Adrenal gland (tissue), 19 donors: ENCODE measurements at regions of chr6 and their contacts with region 1.

Region 1: DNA sequence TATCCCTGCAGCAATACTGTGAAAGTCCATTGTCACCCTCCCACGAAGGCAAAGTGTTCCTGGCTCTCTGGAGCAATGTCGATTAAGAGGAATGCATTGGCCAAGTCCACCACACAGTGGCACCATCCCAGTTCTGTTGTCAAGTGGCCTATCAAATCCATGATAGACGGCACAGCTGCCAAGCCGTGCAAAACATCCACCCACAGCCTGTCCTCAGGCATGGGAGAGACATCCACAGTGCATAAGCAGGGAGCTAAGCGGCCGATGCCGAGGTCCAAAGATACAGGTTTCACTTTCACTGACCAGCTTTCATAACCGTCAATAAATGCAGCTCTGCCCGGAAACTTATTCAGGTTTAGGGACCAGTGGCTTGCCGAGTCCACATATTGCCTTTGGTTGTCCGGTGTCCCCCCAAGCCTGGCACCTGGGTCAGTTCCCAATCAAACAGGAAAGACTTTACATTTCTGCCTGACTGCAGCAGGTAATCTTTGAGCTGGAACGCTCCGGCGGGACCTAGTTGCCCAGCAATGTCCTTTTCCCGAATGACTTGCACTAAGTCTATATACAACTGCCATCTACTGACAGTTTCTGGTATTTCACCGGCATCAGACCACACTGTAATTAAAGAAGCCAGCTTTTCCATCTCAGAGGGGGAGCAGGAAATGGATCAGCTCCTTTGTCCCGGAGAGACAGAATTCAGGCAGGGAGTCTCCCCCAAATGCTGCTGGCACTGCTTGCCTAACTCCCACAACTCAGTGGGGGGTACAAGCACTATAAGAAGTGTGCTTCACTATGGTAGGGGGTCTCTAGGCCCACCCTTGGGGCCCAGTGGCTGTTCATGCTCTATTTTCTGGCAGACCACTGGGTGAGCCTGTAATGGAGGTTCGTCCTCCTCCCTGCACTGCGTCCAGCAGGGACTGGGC is 6.3 kb downstream of the ZKSCAN3 start:
- DNase-seq: peak; percentile 78 to 91 (median 85)
- H3K4me3 ChIP-seq: peak overlapping the region in 3 of 4 donors; percentile 35 to 80 (median 54)
- H3K27ac ChIP-seq: peak overlapping the region; percentile 14 to 95 (median 76)
- H3K4me1 ChIP-seq: peaks cover 4 to 19% of the 10 kb centered on the region in 2 donors
- H3K27me3 ChIP-seq: no peaks in the 10 kb centered on the region
- CTCF ChIP-seq: peak; percentile 66 to 94 (median 92)
- POLR2A ChIP-seq: no peak

Region 2: GRCh38 chr6:27902335-27903314 is 453.4 kb before region 1 on chr6:
- intact Hi-C with region 1: loop called in 1 of 2 experiments (anchors 10 kb)
- DNase-seq: peak; percentile 75 to 97 (median 86)
- H3K4me3 ChIP-seq: peak overlapping the region in 3 of 4 donors; percentile 46 to 85 (median 56)
- H3K27ac ChIP-seq: peak overlapping the region; percentile 59 to 91 (median 84)
- H3K4me1 ChIP-seq: no peaks in the 10 kb centered on the region
- H3K27me3 ChIP-seq: no peaks in the 10 kb centered on the region
- CTCF ChIP-seq: peak in 1 of 6 experiments; percentile 10
- POLR2A ChIP-seq: no peak

Region 3: GRCh38 chr6:28080631-28081485 is 275.1 kb before region 1 on chr6:
- intact Hi-C with region 1: loop called in 1 of 2 experiments (anchors 10 kb)
- DNase-seq: peak; percentile 92 to 99 (median 97)
- H3K4me3 ChIP-seq: peak overlapping the region; percentile 48 to 66 (median 54)
- H3K27ac ChIP-seq: peak overlapping the region; percentile 46 to 94 (median 82)
- H3K4me1 ChIP-seq: peaks cover 6 to 8% of the 10 kb centered on the region in 2 donors
- H3K27me3 ChIP-seq: no peaks in the 10 kb centered on the region
- CTCF ChIP-seq: no peak
- POLR2A ChIP-seq: peak in 1 of 2 donors; percentile 65

Region 4: GRCh38 chr6:28104392-28105244 is 251.4 kb before region 1 on chr6:
- intact Hi-C with region 1: no loop called
- DNase-seq: peak; percentile 75 to 86 (median 80)
- H3K4me3 ChIP-seq: peak overlapping the region in 3 of 4 donors; percentile 63 to 89 (median 89)
- H3K27ac ChIP-seq: peak overlapping the region; percentile 9 to 97 (median 82)
- H3K4me1 ChIP-seq: no peaks in the 10 kb centered on the region
- H3K27me3 ChIP-seq: no peaks in the 10 kb centered on the region
- CTCF ChIP-seq: peak; percentile 67 to 81 (median 71)
- POLR2A ChIP-seq: peak; percentile 26 to 68

Region 5: GRCh38 chr6:28136585-28137504 is 219.2 kb before region 1 on chr6:
- intact Hi-C with region 1: loop called (anchors 5 to 10 kb)
- DNase-seq: peak; percentile 88 to 97 (median 96)
- H3K4me3 ChIP-seq: peak overlapping the region; percentile 54 to 90 (median 72)
- H3K27ac ChIP-seq: peak overlapping the region; percentile 89 to 96 (median 95)
- H3K4me1 ChIP-seq: peaks cover 5 to 31% of the 10 kb centered on the region in 2 donors
- H3K27me3 ChIP-seq: no peaks in the 10 kb centered on the region
- CTCF ChIP-seq: no peak
- POLR2A ChIP-seq: peak; percentile 50 to 67

Region 6: DNA sequence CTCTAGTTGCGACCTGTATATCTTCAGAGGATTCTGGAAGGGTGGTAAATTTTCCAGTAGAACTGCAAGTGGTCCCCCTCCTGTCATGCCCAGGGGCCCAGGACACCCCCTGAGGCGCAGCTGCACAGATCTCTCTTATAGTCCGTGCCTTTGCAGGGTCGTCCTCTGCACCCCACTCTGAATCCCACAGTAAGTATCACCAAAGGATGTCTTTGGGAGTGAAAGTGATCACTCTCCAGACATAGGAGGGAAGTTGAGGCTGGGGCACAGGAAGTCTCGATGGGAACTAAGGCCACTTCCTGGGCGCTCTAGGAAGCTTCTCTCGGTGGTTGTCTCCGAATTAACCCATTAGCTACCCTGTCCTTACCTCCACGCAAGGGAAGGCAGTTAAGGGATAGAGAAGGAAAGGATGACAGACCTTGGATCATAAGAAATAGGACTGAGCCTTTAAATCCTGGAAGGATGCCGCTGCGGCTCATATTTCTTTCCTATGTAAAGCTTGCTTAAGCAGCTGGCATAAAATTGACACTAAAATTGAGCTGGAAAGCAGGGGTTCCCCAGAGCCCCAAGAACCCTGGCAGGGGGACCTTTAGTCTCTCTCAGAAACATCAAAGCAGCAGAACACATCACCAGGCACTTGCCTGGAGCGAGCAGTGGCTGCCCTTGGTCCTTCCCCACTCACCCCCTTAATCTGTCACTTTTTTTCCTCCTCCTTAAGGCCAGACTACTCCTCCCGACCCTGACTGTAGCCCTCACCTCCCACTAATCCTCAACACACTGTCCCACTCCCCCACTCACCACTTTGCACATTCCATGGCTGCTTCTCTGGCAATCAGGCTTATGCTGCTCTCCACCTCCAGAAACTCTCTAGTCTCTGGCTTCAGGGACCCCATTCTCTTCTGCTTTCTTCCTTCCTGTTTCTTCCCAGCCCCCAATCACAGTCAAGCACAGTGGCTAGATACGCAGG is 103.7 kb before region 1 on chr6 and contains the start of gene ZKSCAN4:
- intact Hi-C with region 1: loop called in 1 of 2 experiments (anchors 10 kb)
- DNase-seq: peak; percentile 70 to 84 (median 82)
- H3K4me3 ChIP-seq: peak within 1 kb of the TSS; percentile 72 to 86 (median 77)
- H3K27ac ChIP-seq: peak within 1 kb of the TSS in 3 of 5 donors; percentile 45 to 79 (median 49)
- H3K4me1 ChIP-seq: peaks cover 17 to 29% of the 10 kb centered on the region in 2 donors
- H3K27me3 ChIP-seq: no peaks in the 10 kb centered on the region
- CTCF ChIP-seq: no peak
- POLR2A ChIP-seq: no peak
- total RNA-seq, gene ZKSCAN4: 1.5 to 7.3 (median 5.1) TPM

Region 7: GRCh38 chr6:28281288-28282064 is 74.5 kb before region 1 on chr6 and contains the start of gene PGBD1:
- intact Hi-C with region 1: loop called in 1 of 2 experiments (anchors 10 kb)
- DNase-seq: peak; percentile 61 to 74 (median 65)
- H3K4me3 ChIP-seq: peak within 1 kb of the TSS in 3 of 4 donors; percentile 25 to 74 (median 71)
- H3K27ac ChIP-seq: peak within 1 kb of the TSS in 2 of 5 donors; percentile 11 to 24
- H3K4me1 ChIP-seq: peaks cover 0 to 17% of the 10 kb centered on the region in 2 donors
- H3K27me3 ChIP-seq: no peaks in the 10 kb centered on the region
- CTCF ChIP-seq: no peak
- POLR2A ChIP-seq: peak; percentile 18 to 32
- total RNA-seq, gene PGBD1: 1.1 to 7.8 (median 3.1) TPM